Sigmoid colon (tissue), 7 donors: ENCODE measurements at regions of chr22 and their contacts with region 1.

Region 1: DNA sequence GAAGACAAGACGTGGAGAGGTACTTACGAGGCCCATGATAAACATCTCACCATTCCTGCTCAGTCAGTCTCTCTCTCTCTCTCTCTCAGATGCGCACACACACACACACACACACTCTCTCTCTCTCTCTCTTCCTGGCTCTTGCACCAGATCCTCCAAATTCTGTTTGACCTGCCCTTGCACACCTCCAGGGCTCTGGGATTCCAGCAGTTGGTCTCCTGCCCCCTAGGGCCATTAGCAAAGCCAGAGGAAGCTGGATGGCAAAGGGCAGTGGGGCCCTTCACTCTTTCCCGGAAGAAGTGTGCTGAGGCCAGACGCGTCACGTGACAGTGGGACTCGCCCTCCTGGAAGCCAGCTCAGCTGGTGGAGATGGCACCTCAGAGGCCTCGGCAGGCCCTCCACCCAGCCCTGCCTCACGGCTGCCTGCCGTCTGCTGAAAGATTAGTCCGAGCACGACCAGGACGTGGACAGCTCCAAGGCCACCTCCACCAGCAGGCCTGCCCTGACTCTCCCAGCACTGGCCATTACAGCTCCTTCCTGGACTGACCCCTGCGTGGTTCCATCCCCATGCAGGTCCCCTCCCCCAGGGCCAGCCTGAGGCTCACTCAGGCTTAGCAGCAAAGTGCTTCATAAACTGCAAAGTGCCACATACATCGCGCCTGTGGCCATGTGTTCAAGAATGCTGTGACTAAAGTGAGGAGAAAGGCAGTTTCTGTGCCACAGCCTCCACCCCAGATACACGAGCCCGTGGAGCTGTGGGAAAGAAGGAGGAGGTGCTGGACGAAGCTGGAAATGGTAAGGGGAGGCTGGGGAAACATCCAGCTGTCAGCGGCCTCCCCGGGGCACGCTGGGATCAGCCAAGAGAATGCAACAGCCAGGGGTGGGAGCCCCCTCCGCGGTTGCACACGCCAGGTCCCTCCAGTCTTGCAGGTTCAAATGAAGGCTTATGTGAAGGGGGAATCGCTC is 3.7 kb downstream of the PDGFB start:
- DNase-seq: peak; percentile 86
- H3K4me3 ChIP-seq: peak overlapping the region in 3 of 4 donors; percentile 42 to 57 (median 53)
- H3K27ac ChIP-seq: peak overlapping the region; percentile 67 to 76 (median 70)
- H3K4me1 ChIP-seq: peaks cover 0 to 65% (median 55%) of the 10 kb centered on the region in 4 donors
- H3K27me3 ChIP-seq: peaks cover 21 to 47% (median 42%) of the 10 kb centered on the region in 3 donors
- CTCF ChIP-seq: no peak
- EP300 ChIP-seq: no peak
- POLR2A ChIP-seq: no peak

Region 2: GRCh38 chr22:39170825-39171622 is 70.1 kb before region 1 on chr22:
- intact Hi-C with region 1: loop called (anchors 5 kb)
- DNase-seq: peak; percentile 89
- H3K4me3 ChIP-seq: no peak overlapping the region
- H3K27ac ChIP-seq: peak overlapping the region; percentile 24 to 47 (median 28)
- H3K4me1 ChIP-seq: peaks cover 0 to 39% (median 36%) of the 10 kb centered on the region in 4 donors
- H3K27me3 ChIP-seq: no peaks in the 10 kb centered on the region
- CTCF ChIP-seq: peak; percentile 84 to 96 (median 94)
- EP300 ChIP-seq: no peak
- POLR2A ChIP-seq: no peak

Region 3: DNA sequence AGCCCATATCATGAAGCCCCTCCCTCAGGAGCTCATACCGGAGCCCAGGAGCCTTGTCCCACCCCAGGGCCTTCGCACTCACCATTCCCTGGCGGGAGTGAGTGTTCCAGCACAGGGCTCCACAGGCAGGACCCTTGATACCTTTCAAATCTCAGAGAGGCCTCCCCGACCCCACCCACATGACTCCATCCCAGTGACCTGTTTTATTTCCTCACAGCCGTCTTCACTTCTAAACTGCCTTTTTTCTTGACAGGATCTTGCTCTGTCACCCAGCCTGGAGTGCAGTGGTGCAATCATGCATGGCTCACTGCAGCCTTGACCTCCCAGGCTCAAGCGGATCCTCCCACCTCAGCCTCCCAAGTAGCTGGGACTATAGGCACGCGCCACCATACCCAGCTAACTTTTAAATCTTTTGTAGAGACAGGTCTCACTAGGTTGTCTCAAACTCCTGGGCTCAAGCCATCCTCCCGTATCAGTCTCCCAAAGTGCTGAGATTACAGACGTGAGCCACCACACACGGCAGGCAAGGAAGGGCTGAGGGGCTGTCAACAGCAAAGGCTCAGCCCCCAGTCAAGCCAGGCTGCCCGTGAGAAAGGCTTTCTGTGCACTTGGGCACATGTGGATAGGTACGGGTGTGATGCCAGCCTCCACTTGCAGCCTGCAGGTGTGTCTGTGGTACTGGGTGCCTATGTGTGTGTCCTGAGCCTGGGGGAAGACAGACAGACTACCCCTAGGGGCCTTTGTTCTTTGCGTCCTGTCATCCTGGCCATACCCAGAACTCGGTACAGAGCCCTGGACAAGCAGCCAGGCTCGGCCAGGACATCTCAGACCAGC is 69.0 kb after region 1 on chr22:
- intact Hi-C with region 1: loop called (anchors 5 kb)
- DNase-seq: no peak
- H3K4me3 ChIP-seq: no peak overlapping the region
- H3K27ac ChIP-seq: peak overlapping the region; percentile 45 to 82 (median 78)
- H3K4me1 ChIP-seq: peaks cover 0 to 34% (median 23%) of the 10 kb centered on the region in 4 donors
- H3K27me3 ChIP-seq: no peaks in the 10 kb centered on the region
- CTCF ChIP-seq: no peak
- EP300 ChIP-seq: no peak
- POLR2A ChIP-seq: no peak